ENCODE measurements at regions of chr1 and their contacts with region 1.

Region 1: GRCh38 chr1:235397733-235398132 is 30.5 kb downstream of the TBCE start:
- DNase-seq: peak; percentile 78
- ATAC-seq: peak; percentile 65
- H3K4me3 ChIP-seq: no peak overlapping the region
- H3K27ac ChIP-seq: 0 out of 2 replicates have a peak overlapping the region, but pooled peaks have one; percentile 16
- H3K4me1 ChIP-seq: peaks cover 8% of the 10 kb centered on the region; the same call in 1 of the 2 replicates
- H3K27me3 ChIP-seq: no peaks in the 10 kb centered on the region
- CTCF ChIP-seq: no peak

Region 2: GRCh38 chr1:235093696-235094592 is 303.8 kb before region 1 on chr1:
- CTCF ChIA-PET with region 1: no interaction called
- POLR2A ChIA-PET with region 1: no interaction called
- intact Hi-C with region 1: no loop called
- DNase-seq: peak; percentile 73
- ATAC-seq: peak; percentile 87
- H3K4me3 ChIP-seq: no peak overlapping the region
- H3K27ac ChIP-seq: no peak overlapping the region
- H3K4me1 ChIP-seq: 0 out of 2 replicates have a peak, but pooled peaks cover 5% of the 10 kb centered on the region
- H3K27me3 ChIP-seq: no peaks in the 10 kb centered on the region
- CTCF ChIP-seq: peak; percentile 85

Region 3: GRCh38 chr1:235367000-235367908 is 30.5 kb before region 1 on chr1 and contains the start of gene TBCE:
- CTCF ChIA-PET with region 1: interaction called, 15 read pairs
- POLR2A ChIA-PET with region 1: no interaction called
- intact Hi-C with region 1: no loop called
- DNase-seq: peak; percentile 97
- ATAC-seq: peak; percentile 98
- H3K4me3 ChIP-seq: peak within 1 kb of the TSS; percentile 67
- H3K27ac ChIP-seq: peak within 1 kb of the TSS; percentile 78
- H3K4me1 ChIP-seq: peaks cover 7% of the 10 kb centered on the region; the same call in 1 of the 2 replicates
- H3K27me3 ChIP-seq: no peaks in the 10 kb centered on the region
- CTCF ChIP-seq: no peak
- total RNA-seq, gene TBCE: 31.8 and 41.0 TPM in 2 replicates

Region 4: DNA sequence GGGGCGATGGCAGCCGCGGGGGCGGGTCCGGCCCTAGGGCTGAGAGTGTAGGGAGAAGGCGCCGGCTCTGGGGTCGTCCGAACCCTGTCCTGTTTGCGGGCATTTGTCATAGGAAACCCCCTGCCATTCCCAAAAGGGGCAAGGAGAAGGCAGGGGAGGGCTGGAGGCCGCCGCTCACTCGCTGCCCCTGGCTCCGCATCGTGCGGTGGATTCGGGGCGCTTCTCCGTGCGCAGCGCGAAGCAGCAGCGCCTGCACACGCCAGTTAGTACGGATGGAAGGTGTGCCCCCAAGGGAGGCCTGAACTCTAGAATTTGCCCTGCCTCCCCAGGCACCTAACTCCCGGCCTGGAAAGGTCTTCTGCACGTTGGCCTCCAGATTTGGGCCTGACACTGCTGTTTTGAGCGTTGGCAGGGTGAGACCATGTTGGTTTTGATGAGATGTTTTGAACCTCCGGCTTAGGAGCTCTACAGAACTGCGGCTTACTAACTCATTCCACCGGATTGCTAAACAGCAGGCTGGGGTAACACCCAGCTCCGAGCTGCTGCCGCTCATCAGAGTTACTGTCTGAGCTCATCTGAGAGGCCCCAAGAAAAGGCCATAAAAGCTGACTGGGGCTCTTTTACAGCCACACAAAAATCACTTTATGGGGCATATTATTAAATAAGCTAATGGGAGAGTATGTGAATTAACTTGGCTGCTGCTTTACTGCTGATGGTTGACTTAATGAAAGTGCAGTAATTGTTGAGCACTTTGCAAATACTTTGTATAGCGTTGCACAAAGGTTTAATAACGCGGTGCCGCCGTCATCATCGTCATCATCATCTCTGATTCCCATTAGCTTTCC is 745.6 kb after region 1 on chr1:
- CTCF ChIA-PET with region 1: no interaction called
- POLR2A ChIA-PET with region 1: no interaction called
- intact Hi-C with region 1: no loop called
- DNase-seq: peak; percentile 9
- ATAC-seq: peak; percentile 35
- H3K4me3 ChIP-seq: peak overlapping the region; percentile 67
- H3K27ac ChIP-seq: no peak overlapping the region
- H3K4me1 ChIP-seq: peaks cover 8% of the 10 kb centered on the region; the same call in 1 of the 2 replicates
- H3K27me3 ChIP-seq: no peaks in the 10 kb centered on the region
- CTCF ChIP-seq: no peak